Ovary (tissue), 10 donors: ENCODE measurements at regions of chr20 and their contacts with region 1.

Region 1: DNA sequence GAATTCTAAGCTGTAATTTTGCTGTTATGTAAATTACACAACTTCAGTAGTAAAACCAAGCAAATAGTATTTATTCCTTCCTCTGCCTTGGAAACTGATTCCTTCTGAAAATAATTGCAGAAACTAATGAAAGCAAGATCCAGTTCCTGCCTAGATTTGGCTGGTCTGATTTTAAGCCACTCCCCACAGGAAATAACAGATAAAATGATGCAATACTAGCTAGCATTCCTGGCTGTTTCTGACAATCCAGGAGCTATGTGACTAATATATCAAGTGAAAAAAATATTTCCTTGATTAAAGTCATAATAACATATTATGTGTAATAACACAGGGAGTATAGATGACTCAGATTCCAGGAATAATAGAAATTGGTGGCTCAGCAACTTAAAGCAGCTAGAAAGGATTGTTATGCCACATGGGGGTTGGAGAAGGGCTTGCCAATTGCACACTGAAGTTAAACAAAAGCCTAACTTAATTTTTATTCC is 182.7 kb upstream of the SALL4 start:
- DNase-seq: no peak
- H3K4me3 ChIP-seq: no peak overlapping the region
- H3K27ac ChIP-seq: no peak overlapping the region
- H3K4me1 ChIP-seq: no peaks in the 10 kb centered on the region
- H3K27me3 ChIP-seq: no peaks in the 10 kb centered on the region
- CTCF ChIP-seq: no peak
- EP300 ChIP-seq: no peak
- POLR2A ChIP-seq: no peak

Region 2: DNA sequence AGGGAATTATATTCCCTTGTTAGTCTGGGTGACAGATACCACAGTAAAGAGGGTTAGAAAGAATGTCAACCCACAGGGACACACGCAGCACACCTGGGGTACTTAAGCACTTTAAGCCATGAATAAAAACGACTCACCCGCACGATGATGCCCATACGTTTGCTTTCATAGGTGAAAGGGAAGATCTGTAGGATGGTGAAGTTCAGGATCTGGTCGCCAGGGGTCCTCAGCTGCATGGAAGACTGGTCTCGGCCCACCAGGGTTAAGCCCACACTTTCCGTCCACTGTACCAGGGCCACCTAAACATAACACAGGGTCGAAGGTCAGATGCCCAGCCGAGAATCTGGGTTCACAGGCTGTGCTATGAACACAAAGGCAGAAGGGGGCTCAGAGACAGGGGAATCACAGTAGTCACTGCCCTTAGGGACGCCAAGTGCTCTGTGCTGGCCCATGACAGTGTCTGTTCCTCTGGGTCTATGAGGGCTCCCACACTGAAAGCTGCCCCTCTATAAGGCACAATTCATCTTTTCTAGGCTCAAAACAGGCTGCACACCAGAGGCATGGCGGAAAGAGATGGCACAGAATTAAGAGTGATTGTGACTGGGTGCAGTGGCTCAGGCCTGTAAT is 345.7 kb before region 1 on chr20:
- intact Hi-C with region 1: loop called in 1 of 4 experiments (anchors 10 kb)
- DNase-seq: peak; percentile 57 to 83 (median 77)
- H3K4me3 ChIP-seq: no peak overlapping the region
- H3K27ac ChIP-seq: no peak overlapping the region
- H3K4me1 ChIP-seq: no peaks in the 10 kb centered on the region
- H3K27me3 ChIP-seq: no peaks in the 10 kb centered on the region
- CTCF ChIP-seq: peak; percentile 69 to 78 (median 75)
- EP300 ChIP-seq: no peak
- POLR2A ChIP-seq: no peak

Region 3: GRCh38 chr20:52389606-52390005 is 404.6 kb after region 1 on chr20:
- intact Hi-C with region 1: no loop called
- DNase-seq: no peak
- H3K4me3 ChIP-seq: no peak overlapping the region
- H3K27ac ChIP-seq: no peak overlapping the region
- H3K4me1 ChIP-seq: no peaks in the 10 kb centered on the region
- H3K27me3 ChIP-seq: no peaks in the 10 kb centered on the region
- CTCF ChIP-seq: no peak
- EP300 ChIP-seq: no peak
- POLR2A ChIP-seq: no peak